PC-9 (cell line): ENCODE measurements at regions of chr13 and their contacts with region 1.

Region 1: GRCh38 chr13:109684824-109685202 is 101.6 kb downstream of the IRS2 start:
- DNase-seq: peak; percentile 75 to 96
- H3K4me3 ChIP-seq: peak overlapping the region; percentile 52
- H3K27ac ChIP-seq: peak overlapping the region; percentile 95
- H3K4me1 ChIP-seq: peaks cover 50% of the 10 kb centered on the region
- H3K27me3 ChIP-seq: no peaks in the 10 kb centered on the region
- CTCF ChIP-seq: no peak

Region 2: GRCh38 chr13:109778102-109778542 is 93.3 kb after region 1 on chr13:
- CTCF ChIA-PET with region 1: no interaction called
- POLR2A ChIA-PET with region 1: no interaction called
- intact Hi-C with region 1: loop called (anchors 5 kb)
- DNase-seq: peak; percentile 43 to 98
- H3K4me3 ChIP-seq: peak overlapping the region; percentile 87
- H3K27ac ChIP-seq: peak overlapping the region; percentile 83
- H3K4me1 ChIP-seq: peaks cover 58% of the 10 kb centered on the region
- H3K27me3 ChIP-seq: no peaks in the 10 kb centered on the region
- CTCF ChIP-seq: no peak

Region 3: DNA sequence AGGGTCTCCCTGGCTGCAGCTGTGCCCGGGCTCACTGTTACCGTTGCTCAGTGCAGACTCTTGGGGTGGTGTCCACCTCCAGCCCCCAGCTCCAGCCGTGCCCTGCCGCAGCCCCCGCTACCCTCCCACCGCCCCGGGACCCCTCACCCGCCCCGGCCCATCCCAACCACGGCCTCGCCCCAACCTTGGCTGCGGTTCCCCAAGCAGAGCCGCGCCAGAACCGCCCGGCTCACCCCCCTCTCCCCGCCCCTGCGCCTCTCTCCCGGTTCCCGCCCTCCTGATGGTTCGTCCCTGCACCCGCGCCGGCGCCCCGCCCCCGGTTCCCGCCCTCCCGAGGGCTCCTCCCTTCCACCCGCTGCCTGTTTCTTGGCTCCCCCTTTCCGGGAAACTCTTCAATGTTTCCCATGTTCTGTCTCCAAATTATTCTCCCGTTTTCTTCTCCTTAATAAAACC is 1189.7 kb after region 1 on chr13:
- CTCF ChIA-PET with region 1: no interaction called
- POLR2A ChIA-PET with region 1: no interaction called
- intact Hi-C with region 1: no loop called
- DNase-seq: peak; percentile 49 to 79
- H3K4me3 ChIP-seq: peak overlapping the region; percentile 54
- H3K27ac ChIP-seq: no peak overlapping the region
- H3K4me1 ChIP-seq: peaks cover 20% of the 10 kb centered on the region
- H3K27me3 ChIP-seq: no peaks in the 10 kb centered on the region
- CTCF ChIP-seq: no peak